CD8-positive, alpha-beta T cell (primary cell): ENCODE measurements at regions of chr16 and their contacts with region 1.

Region 1: GRCh38 chr16:12095275-12096156 is 119.0 kb downstream of the SNX29 start:
- DNase-seq: peak in 8 of 9 experiments; percentile 50 to 83 (median 71)
- ATAC-seq: peak; percentile 48
- H3K4me3 ChIP-seq: peak overlapping the region; percentile 10 to 15
- H3K4me3 Mint-ChIP-seq: peak overlapping the region; percentile 73
- H3K27ac ChIP-seq: no peak overlapping the region
- H3K27ac Mint-ChIP-seq: peak overlapping the region; percentile 12
- H3K4me1 ChIP-seq: peaks cover 9% of the 10 kb centered on the region
- H3K4me1 Mint-ChIP-seq: peaks cover 35% of the 10 kb centered on the region
- H3K27me3 ChIP-seq: no peaks in the 10 kb centered on the region
- H3K27me3 Mint-ChIP-seq: no peaks in the 10 kb centered on the region
- CTCF ChIP-seq: peak; percentile 94

Region 2: DNA sequence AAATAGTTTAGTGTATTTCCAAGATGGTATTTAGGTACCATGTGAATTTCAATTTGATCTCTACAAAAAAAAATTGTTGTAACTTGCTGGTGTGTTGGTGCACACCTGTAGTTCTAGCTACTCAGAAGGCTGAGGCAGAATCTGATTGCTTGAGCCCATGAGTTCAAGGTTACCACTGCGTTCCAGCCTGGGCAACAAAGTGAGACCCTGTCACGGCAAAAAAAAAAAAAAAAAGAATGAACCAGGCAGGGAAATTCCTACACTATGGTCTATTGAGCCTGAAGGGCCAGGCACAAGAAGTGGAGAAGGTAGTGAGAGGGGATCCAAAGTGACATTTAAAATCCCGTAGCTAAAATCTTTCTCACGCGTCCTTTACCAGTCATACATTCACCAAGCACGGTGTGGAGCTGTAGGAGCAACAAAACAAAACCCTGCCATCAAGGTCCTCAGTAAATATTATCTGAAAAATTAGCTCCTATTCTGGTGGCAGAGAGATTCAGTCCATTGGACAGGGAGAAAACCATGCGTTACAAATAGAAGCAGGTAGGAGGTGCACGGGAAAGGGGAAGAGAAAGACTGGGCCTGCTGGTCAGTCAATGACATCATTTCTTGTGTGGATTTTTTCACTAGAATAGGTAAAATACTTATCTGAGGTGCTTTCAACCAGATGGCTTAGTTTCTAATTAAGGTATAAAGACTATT is 380.1 kb before region 1 on chr16:
- CTCF ChIA-PET with region 1: no interaction called
- POLR2A ChIA-PET with region 1: no interaction called
- intact Hi-C with region 1: no loop called
- DNase-seq: no peak
- ATAC-seq: no peak
- H3K4me3 ChIP-seq: no peak overlapping the region
- H3K4me3 Mint-ChIP-seq: no peak overlapping the region
- H3K27ac ChIP-seq: no peak overlapping the region
- H3K27ac Mint-ChIP-seq: no peak overlapping the region
- H3K4me1 ChIP-seq: no peaks in the 10 kb centered on the region
- H3K4me1 Mint-ChIP-seq: peaks cover 25% of the 10 kb centered on the region
- H3K27me3 ChIP-seq: no peaks in the 10 kb centered on the region
- H3K27me3 Mint-ChIP-seq: no peaks in the 10 kb centered on the region
- CTCF ChIP-seq: no peak

Region 3: GRCh38 chr16:12111223-12111622 is 15.7 kb after region 1 on chr16:
- CTCF ChIA-PET with region 1: interaction called, 46 read pairs
- POLR2A ChIA-PET with region 1: no interaction called
- intact Hi-C with region 1: no loop called
- DNase-seq: no peak
- ATAC-seq: no peak
- H3K4me3 ChIP-seq: no peak overlapping the region
- H3K4me3 Mint-ChIP-seq: no peak overlapping the region
- H3K27ac ChIP-seq: no peak overlapping the region
- H3K27ac Mint-ChIP-seq: no peak overlapping the region
- H3K4me1 ChIP-seq: no peaks in the 10 kb centered on the region
- H3K4me1 Mint-ChIP-seq: no peaks in the 10 kb centered on the region
- H3K27me3 ChIP-seq: no peaks in the 10 kb centered on the region
- H3K27me3 Mint-ChIP-seq: no peaks in the 10 kb centered on the region
- CTCF ChIP-seq: no peak

Region 4: GRCh38 chr16:13453938-13454553 is 1358.5 kb after region 1 on chr16:
- CTCF ChIA-PET with region 1: interaction called, 3 read pairs
- POLR2A ChIA-PET with region 1: no interaction called
- intact Hi-C with region 1: loop called in 1 of 2 experiments (anchors 10 kb)
- DNase-seq: peak in 2 of 9 experiments; percentile 1 to 7
- ATAC-seq: no peak
- H3K4me3 ChIP-seq: no peak overlapping the region
- H3K4me3 Mint-ChIP-seq: no peak overlapping the region
- H3K27ac ChIP-seq: no peak overlapping the region
- H3K27ac Mint-ChIP-seq: no peak overlapping the region
- H3K4me1 ChIP-seq: no peaks in the 10 kb centered on the region
- H3K4me1 Mint-ChIP-seq: no peaks in the 10 kb centered on the region
- H3K27me3 ChIP-seq: no peaks in the 10 kb centered on the region
- H3K27me3 Mint-ChIP-seq: peaks cover 7% of the 10 kb centered on the region
- CTCF ChIP-seq: no peak